ENCODE measurements at regions of chr6 and their contacts with region 1.

Region 1: GRCh38 chr6:137389150-137389704 is 105.0 kb downstream of the OLIG3 start:
- DNase-seq: peak in 8 of 9 donors; percentile 50 to 69 (median 64)
- ATAC-seq: peak; percentile 98
- H3K4me3 ChIP-seq: peak overlapping the region; percentile 18
- H3K4me3 Mint-ChIP-seq: peak overlapping the region; percentile 51 to 86 (median 80)
- H3K27ac ChIP-seq: peak overlapping the region; percentile 34
- H3K27ac Mint-ChIP-seq: peak overlapping the region; percentile 67 to 93 (median 83)
- H3K4me1 ChIP-seq: peaks cover 28 to 58% of the 10 kb centered on the region in 2 donors
- H3K4me1 Mint-ChIP-seq: peaks cover 43 to 78% (median 63%) of the 10 kb centered on the region in 7 donors
- H3K27me3 ChIP-seq: no peaks in the 10 kb centered on the region
- H3K27me3 Mint-ChIP-seq: no peaks in the 10 kb centered on the region

Region 2: DNA sequence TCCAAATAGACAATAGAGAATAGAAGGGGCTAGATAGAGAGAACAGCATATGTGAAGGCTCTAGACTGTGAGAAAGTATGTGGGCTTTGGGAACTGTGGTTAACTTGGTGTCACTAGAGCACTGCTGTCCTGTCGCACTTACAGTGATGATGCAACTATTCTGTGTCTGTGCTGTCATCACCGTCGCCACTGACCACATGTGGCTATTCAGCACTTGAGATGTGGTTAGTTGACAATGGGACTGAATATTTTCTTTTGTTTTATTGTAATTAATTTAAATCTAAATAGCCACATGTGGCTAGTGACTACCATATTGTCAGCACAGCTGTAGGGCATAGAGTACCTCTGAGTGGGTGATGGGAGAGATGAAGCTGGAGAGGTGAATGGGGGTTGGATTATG is 131.1 kb before region 1 on chr6:
- CTCF ChIA-PET with region 1: no interaction called
- POLR2A ChIA-PET with region 1: no interaction called
- intact Hi-C with region 1: no loop called
- DNase-seq: no peak
- ATAC-seq: peak; percentile 92
- H3K4me3 ChIP-seq: no peak overlapping the region
- H3K4me3 Mint-ChIP-seq: no peak overlapping the region
- H3K27ac ChIP-seq: no peak overlapping the region
- H3K27ac Mint-ChIP-seq: peak overlapping the region in 1 of 9 donors; percentile 47
- H3K4me1 ChIP-seq: peaks cover 0 to 14% of the 10 kb centered on the region in 2 donors
- H3K4me1 Mint-ChIP-seq: peaks cover 0 to 14% (median 4%) of the 10 kb centered on the region in 7 donors
- H3K27me3 ChIP-seq: no peaks in the 10 kb centered on the region
- H3K27me3 Mint-ChIP-seq: peaks cover 6 to 25% (median 16%) of the 10 kb centered on the region in 5 donors

Region 3: GRCh38 chr6:137363805-137364138 is 25.5 kb before region 1 on chr6:
- CTCF ChIA-PET with region 1: interaction called, 3 read pairs
- POLR2A ChIA-PET with region 1: interaction called, 3 read pairs
- intact Hi-C with region 1: loop called in 1 of 2 experiments (anchors 2 kb)
- DNase-seq: peak in 7 of 9 donors; percentile 43 to 70 (median 57)
- ATAC-seq: peak; percentile 73
- H3K4me3 ChIP-seq: no peak overlapping the region
- H3K4me3 Mint-ChIP-seq: peak overlapping the region in 8 of 10 donors; percentile 0 to 75 (median 46)
- H3K27ac ChIP-seq: no peak overlapping the region
- H3K27ac Mint-ChIP-seq: peak overlapping the region in 6 of 9 donors; percentile 3 to 80 (median 64)
- H3K4me1 ChIP-seq: peaks cover 20 to 24% of the 10 kb centered on the region in 2 donors
- H3K4me1 Mint-ChIP-seq: peaks cover 18 to 26% (median 22%) of the 10 kb centered on the region in 7 donors
- H3K27me3 ChIP-seq: no peaks in the 10 kb centered on the region
- H3K27me3 Mint-ChIP-seq: peaks cover 0 to 17% (median 0%) of the 10 kb centered on the region in 5 donors

Region 4: DNA sequence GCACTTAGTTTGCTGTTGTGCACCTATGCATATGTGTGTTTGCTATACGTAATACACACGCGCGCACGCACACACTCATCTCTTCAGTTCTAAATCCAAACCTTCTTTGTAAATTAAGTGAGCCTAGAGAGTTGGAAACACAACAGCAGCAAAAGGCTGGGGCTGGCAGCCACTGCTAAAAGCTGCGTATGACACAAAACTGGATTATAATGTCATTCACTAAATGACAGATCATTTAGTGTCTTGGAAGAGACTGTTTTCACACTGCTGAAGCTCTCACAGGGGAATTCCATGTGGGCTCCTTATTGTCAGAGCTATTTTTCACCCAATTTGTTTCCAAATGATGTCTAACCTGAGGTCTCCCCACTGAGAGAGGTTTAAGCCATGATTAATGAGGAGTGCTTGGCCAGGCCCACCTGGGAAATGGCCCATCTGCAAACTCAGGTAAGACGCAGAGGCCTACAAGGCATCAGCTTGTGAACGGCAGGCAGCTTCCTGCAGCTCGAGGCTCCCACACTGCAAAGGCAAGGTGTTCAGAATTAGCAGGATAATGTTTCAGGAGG is 10.7 kb after region 1 on chr6:
- CTCF ChIA-PET with region 1: no interaction called
- POLR2A ChIA-PET with region 1: no interaction called
- intact Hi-C with region 1: loop called in 1 of 2 experiments (anchors 1 kb)
- DNase-seq: no peak
- ATAC-seq: no peak
- H3K4me3 ChIP-seq: no peak overlapping the region
- H3K4me3 Mint-ChIP-seq: no peak overlapping the region
- H3K27ac ChIP-seq: no peak overlapping the region
- H3K27ac Mint-ChIP-seq: no peak overlapping the region
- H3K4me1 ChIP-seq: no peaks in the 10 kb centered on the region
- H3K4me1 Mint-ChIP-seq: peaks cover 0 to 9% (median 4%) of the 10 kb centered on the region in 7 donors
- H3K27me3 ChIP-seq: no peaks in the 10 kb centered on the region
- H3K27me3 Mint-ChIP-seq: peaks cover 0 to 7% (median 0%) of the 10 kb centered on the region in 5 donors

Region 5: DNA sequence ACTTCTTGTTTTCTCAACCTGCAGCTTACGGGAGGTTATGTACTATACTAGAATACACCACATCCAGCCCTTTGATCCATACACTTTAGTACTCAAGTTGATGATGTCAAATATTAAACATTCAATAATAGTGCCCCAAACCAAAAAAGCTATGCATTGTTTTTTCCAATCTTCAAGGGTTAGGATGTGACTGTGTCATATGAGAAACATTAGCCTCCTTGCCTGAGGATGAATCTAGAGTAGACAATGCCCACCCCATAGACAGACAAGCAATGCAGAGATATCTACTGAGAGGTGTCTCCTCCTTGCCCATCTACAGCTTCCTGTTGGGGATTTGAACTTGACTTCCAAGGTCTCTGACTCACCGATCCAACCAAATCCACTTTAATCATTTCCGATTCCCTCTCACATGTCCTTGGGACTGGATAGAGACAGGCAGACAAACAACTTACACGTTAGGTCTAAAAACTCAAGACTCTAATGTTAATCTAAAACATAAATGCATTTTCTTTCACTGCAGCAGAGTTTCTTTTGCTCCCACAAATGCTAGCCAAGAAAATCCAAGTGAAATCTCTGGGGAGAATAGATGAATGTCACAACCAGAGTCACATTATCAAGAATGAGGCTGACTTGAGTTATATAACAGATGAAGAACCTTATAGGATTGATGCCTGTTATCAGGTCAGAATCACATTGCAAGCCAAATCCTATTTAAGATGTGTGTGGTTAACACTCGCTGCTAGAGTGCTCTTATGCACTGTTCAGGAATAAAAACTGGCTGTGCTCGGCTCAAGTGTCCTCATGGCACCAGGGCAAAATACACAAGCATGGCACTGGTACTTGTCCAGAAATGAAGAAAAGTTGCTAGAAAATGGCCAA is 402.3 kb after region 1 on chr6:
- CTCF ChIA-PET with region 1: no interaction called
- POLR2A ChIA-PET with region 1: no interaction called
- intact Hi-C with region 1: no loop called
- DNase-seq: peak in 1 of 9 donors; percentile 26
- ATAC-seq: no peak
- H3K4me3 ChIP-seq: no peak overlapping the region
- H3K4me3 Mint-ChIP-seq: peak overlapping the region in 1 of 10 donors; percentile 45
- H3K27ac ChIP-seq: no peak overlapping the region
- H3K27ac Mint-ChIP-seq: peak overlapping the region in 8 of 9 donors; percentile 1 to 79 (median 36)
- H3K4me1 ChIP-seq: peaks cover 7 to 28% of the 10 kb centered on the region in 2 donors
- H3K4me1 Mint-ChIP-seq: peaks cover 27 to 65% (median 50%) of the 10 kb centered on the region in 7 donors
- H3K27me3 ChIP-seq: no peaks in the 10 kb centered on the region
- H3K27me3 Mint-ChIP-seq: no peaks in the 10 kb centered on the region